ENCODE measurements at regions of chr12 and their contacts with region 1.

Region 1: GRCh38 chr12:118448341-118448740 is 72.0 kb downstream of the SUDS3 start:
- DNase-seq: no peak
- ATAC-seq: no peak
- H3K4me3 ChIP-seq: no peak overlapping the region
- H3K27ac ChIP-seq: no peak overlapping the region
- H3K4me1 ChIP-seq: no peaks in the 10 kb centered on the region
- H3K27me3 ChIP-seq: peaks cover 10% of the 10 kb centered on the region
- CTCF ChIP-seq: no peak

Region 2: DNA sequence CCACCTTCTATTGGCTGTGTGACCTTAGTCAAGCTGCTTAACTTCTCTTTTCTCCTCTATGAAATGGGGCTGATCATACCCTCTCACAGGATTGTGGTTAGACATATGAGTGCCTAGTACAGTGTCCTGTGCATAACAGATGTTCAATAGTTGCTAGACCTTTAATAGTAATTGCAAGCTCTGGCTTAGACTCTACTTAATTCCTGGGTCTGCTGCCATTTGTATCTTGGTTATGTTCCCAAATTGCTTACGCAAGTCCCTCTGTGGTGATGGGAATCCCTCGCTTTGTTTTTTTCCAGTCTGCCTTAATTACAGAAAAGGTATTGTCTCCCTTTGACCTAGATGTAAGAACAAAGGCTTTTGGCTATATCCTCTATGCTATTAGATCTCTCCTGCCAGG is 56.9 kb before region 1 on chr12:
- CTCF ChIA-PET with region 1: no interaction called
- POLR2A ChIA-PET with region 1: interaction called, 11 read pairs
- in situ Hi-C with region 1: no loop called
- intact Hi-C with region 1: no loop called
- DNase-seq: no peak
- ATAC-seq: no peak
- H3K4me3 ChIP-seq: no peak overlapping the region
- H3K27ac ChIP-seq: no peak overlapping the region
- H3K4me1 ChIP-seq: no peaks in the 10 kb centered on the region
- H3K27me3 ChIP-seq: no peaks in the 10 kb centered on the region
- CTCF ChIP-seq: no peak

Measured in Panc1 (cell line).